Psoas muscle (tissue), 8 donors: ENCODE measurements at regions of chr7 and their contacts with region 1.

Region 1: DNA sequence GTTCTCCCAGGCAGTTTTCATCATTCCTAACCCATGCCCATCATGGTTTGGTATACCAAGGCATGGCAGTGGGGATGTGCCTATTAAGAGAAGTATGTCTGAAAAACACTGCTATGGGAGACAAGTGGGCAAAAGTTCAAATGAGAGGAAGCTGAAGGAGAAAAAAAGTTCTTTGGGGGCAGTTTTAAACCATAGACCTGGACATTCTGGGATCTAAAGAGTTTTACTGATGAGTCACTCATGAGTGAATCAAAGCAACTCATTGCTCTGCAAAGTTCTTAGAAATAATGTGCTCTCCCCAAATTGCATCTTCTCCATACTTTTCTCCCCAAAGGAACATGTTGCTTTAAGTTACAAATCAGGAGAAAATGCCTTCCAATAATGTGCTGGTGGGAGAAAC is 256.9 kb upstream of the MTPN start:
- DNase-seq: no peak
- ATAC-seq: no peak
- H3K4me3 ChIP-seq: no peak overlapping the region
- H3K27ac ChIP-seq: no peak overlapping the region
- H3K4me1 ChIP-seq: no peaks in the 10 kb centered on the region
- H3K27me3 ChIP-seq: peaks cover 0 to 2% (median 0%) of the 10 kb centered on the region in 3 donors
- CTCF ChIP-seq: no peak

Region 2: GRCh38 chr7:135170274-135170997 is 1063.6 kb before region 1 on chr7 and contains the start of gene CYREN:
- intact Hi-C with region 1: no loop called
- DNase-seq: peak; percentile 96 to 98
- ATAC-seq: peak; percentile 82 to 91 (median 84)
- H3K4me3 ChIP-seq: peak within 1 kb of the TSS; percentile 97
- H3K27ac ChIP-seq: peak within 1 kb of the TSS; percentile 100
- H3K4me1 ChIP-seq: peaks cover 35% of the 10 kb centered on the region
- H3K27me3 ChIP-seq: no peaks in the 10 kb centered on the region
- CTCF ChIP-seq: peak; percentile 52
- total RNA-seq, gene CYREN: 20.6 to 29.4 (median 25.3) TPM

Region 3: DNA sequence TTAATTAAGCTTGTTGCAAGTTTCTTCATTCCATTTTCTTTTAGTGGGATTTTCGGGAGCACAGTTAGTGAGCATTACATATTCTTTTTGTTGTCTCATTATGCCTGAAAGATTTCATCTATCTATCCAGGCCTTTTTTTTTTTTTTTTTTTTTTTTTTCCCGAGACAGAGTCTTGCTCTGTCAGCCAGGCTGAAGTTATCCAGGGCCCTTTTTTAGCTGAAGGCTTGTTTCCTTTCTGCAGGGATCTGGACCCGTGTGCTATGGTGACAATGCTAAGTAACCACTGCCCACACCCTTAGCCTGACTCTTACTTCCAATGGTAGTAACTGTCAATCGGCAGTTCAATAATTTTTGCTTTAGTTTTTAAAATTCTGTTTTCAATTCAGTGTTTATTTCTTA is 66.0 kb before region 1 on chr7:
- intact Hi-C with region 1: no loop called
- DNase-seq: no peak
- ATAC-seq: no peak
- H3K4me3 ChIP-seq: no peak overlapping the region
- H3K27ac ChIP-seq: no peak overlapping the region
- H3K4me1 ChIP-seq: no peaks in the 10 kb centered on the region
- H3K27me3 ChIP-seq: no peaks in the 10 kb centered on the region
- CTCF ChIP-seq: no peak

Region 4: DNA sequence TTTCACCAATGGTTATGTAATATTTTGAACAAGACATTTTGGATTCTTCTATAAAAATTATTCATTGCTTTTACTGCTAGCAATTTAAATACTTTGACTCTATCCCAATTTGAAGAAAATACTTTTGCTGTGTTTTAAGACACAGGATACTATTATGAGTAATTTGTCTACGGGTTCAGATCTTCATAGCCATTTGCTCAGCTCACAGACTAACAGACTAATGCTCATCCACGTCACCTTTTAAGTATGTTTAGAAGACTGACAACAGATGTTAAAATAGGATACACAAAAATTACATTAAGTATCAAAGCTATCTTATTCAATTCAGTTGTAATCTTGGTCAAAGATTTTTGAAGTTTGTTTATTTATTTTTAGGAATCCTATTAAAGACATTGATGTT is 383.1 kb after region 1 on chr7:
- intact Hi-C with region 1: loop called in 1 of 2 experiments (anchors 5 kb)
- DNase-seq: no peak
- ATAC-seq: no peak
- H3K4me3 ChIP-seq: no peak overlapping the region
- H3K27ac ChIP-seq: no peak overlapping the region
- H3K4me1 ChIP-seq: no peaks in the 10 kb centered on the region
- H3K27me3 ChIP-seq: no peaks in the 10 kb centered on the region
- CTCF ChIP-seq: no peak